ENCODE measurements at regions of chr12 and their contacts with region 1.

Region 1: GRCh38 chr12:130818635-130819576 is 20.1 kb downstream of the STX2 start:
- DNase-seq: peak; percentile 80
- ATAC-seq: peak; percentile 93
- H3K4me3 Mint-ChIP-seq: peak overlapping the region; percentile 91
- H3K27ac Mint-ChIP-seq: peak overlapping the region; percentile 37
- H3K4me1 Mint-ChIP-seq: peaks cover 14% of the 10 kb centered on the region
- H3K27me3 Mint-ChIP-seq: no peaks in the 10 kb centered on the region
- CTCF ChIP-seq: peak; percentile 91

Region 2: DNA sequence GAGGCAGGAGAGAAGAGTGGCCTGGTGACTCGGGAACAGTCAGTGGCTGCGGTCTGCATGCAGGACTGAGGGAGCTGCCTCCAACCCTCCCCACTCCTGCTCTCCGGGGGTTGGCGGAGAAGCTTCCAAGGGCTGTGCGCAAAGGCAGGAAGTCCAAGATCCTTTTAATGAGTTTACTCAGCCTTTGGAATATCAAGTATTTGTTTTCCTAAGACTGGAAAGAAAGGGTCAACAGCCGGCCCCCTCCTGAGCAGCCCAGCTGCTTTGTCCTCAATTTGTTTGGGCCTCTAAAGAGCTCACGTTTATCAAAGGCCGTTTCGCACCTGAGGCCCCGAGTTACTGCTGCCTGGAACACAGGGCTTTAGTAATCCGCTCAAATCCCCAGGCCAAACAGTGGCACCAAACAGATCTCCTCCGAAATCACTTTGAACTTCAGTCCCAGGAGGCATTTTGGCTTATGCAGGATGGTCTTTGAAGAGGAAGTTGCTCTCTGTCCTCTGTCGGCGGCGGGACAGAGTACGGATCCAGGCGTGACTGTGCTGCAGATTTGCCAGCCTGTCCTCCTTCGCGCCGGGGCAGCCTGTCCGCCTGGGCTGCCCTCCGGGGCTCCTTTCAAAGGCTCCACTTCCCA is 773.8 kb before region 1 on chr12:
- CTCF ChIA-PET with region 1: interaction called, 4 read pairs
- POLR2A ChIA-PET with region 1: no interaction called
- intact Hi-C with region 1: loop called (anchors 5 kb)
- DNase-seq: no peak
- ATAC-seq: no peak
- H3K4me3 Mint-ChIP-seq: no peak overlapping the region
- H3K27ac Mint-ChIP-seq: no peak overlapping the region
- H3K4me1 Mint-ChIP-seq: no peaks in the 10 kb centered on the region
- H3K27me3 Mint-ChIP-seq: peaks cover 30% of the 10 kb centered on the region
- CTCF ChIP-seq: no peak

Region 3: DNA sequence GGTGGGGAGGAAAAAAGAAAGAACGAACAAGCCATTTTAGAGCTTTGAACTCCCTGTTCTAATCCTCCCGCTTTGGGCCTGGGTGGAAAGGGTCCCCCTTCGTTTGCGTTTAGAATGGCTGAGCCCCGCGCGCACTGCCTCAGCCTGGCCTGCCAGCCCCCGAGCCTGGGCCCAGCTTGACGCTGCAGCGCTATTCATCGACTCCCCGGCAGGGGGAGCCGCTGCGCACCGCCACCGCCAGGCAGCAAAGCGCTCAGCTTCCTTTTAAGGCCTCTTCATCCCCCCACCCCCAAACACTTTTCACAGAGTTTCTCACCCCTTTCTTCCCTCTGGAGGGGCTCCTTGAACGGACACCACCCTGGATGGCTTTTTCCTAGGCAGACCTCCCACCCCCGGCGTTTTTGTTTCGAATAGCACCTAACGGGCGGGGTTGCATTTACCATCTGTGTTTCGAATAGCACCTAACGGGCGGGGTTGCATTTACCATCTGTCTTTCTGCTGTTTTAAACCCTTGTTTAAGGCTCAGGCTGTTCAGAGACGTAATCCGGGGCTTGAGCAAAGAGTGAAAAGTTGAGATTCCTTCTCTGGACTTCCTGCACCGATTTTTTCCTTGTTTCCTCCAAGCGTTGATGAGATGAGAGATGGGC is 537.6 kb before region 1 on chr12:
- CTCF ChIA-PET with region 1: no interaction called
- POLR2A ChIA-PET with region 1: no interaction called
- intact Hi-C with region 1: loop called (anchors 5 kb)
- DNase-seq: peak; percentile 27
- ATAC-seq: no peak
- H3K4me3 Mint-ChIP-seq: no peak overlapping the region
- H3K27ac Mint-ChIP-seq: no peak overlapping the region
- H3K4me1 Mint-ChIP-seq: no peaks in the 10 kb centered on the region
- H3K27me3 Mint-ChIP-seq: no peaks in the 10 kb centered on the region
- CTCF ChIP-seq: no peak

Region 4: DNA sequence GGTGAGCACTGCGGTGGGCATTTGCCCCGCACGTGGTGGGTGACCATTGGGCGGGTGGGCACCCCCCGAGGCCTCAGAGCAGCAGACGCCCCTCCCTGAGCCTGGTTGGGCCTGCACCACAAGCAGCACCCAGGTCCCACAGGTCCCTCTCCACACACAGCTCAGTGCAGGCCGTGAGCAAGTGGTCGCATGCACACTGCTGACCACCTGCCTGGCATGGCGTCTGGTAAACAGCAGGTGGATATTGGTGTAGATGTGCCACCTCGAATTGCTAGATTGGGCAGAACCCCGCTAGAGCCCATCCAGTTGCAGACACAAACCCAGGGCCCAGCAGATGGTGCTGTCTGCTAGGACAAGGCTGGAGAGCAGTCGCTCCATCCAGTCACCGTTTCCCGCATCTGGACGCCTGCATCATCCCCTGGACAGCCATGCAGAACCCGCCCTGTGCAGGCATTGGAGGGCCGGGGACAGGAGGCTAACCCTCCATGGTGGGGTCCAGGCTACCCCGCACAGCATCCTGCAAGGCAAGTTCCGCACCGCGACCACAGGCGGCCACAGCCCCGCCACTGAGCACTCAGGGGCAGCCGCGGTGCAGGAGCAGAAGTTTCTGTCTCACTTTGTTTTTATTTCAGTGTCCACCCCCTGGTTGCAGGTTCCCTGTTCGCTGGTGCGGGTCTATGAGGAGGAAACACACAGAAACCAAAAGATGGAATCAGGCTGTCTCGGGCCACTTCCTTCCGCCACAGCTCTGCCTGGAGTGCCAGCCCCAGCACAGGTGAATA is 57.2 kb before region 1 on chr12:
- CTCF ChIA-PET with region 1: no interaction called
- POLR2A ChIA-PET with region 1: no interaction called
- intact Hi-C with region 1: loop called (anchors 1 kb)
- DNase-seq: no peak
- ATAC-seq: peak; percentile 34
- H3K4me3 Mint-ChIP-seq: peak overlapping the region; percentile 9
- H3K27ac Mint-ChIP-seq: no peak overlapping the region
- H3K4me1 Mint-ChIP-seq: peaks cover 10% of the 10 kb centered on the region
- H3K27me3 Mint-ChIP-seq: peaks cover 7% of the 10 kb centered on the region
- CTCF ChIP-seq: no peak

Region 5: DNA sequence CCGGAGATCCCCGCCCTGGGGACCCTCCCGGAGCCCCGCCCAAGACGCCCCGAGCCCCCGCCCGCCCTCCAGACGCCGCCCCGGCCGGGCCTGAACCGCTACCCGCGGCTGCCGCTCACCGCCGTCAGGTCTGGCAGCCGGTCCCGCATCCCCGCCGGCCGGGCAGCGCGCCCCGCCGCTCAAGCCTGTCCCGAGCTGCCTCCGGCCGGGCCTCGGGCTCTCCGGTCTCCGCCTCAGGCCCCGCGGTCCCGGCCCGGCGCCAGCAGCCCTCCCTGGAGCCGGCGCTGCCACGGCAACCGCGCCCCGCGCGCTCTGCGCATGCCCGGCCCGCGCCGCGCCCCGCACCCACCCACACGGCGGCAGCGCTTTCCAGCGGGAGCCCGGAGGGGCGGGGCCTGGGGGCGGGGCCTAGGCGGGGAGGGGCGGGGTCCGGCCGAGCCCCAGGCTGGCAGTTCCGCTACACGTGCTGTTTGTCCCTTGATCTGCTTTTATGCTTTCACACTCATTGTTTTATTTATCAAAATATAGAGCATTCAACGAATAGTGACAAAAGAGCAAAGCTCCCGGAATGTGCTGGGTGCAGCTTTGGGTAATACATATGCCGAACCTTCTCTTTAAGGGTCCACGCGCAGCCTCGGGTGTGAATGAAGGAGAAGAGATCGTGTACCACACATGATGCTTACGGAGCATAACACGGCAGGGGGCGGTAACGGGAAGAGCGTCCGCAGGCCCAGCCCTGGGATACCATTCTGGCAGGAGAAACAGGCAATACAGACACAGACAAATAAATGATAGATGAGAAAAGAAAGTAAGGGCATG is 20.3 kb after region 1 on chr12 and contains the start of gene STX2:
- CTCF ChIA-PET with region 1: interaction called, 4 read pairs
- POLR2A ChIA-PET with region 1: no interaction called
- intact Hi-C with region 1: loop called (anchors 1 kb)
- DNase-seq: peak; percentile 96
- ATAC-seq: peak; percentile 94
- H3K4me3 Mint-ChIP-seq: peak within 1 kb of the TSS; percentile 83
- H3K27ac Mint-ChIP-seq: peak within 1 kb of the TSS; percentile 61
- H3K4me1 Mint-ChIP-seq: peaks cover 18% of the 10 kb centered on the region
- H3K27me3 Mint-ChIP-seq: no peaks in the 10 kb centered on the region
- CTCF ChIP-seq: no peak
- total RNA-seq, gene STX2: 11.0 and 11.4 TPM in 2 replicates

Region 6: GRCh38 chr12:130871286-130872178 is 52.6 kb after region 1 on chr12 and contains the start of gene RAN:
- CTCF ChIA-PET with region 1: interaction called, 4 read pairs
- POLR2A ChIA-PET with region 1: interaction called, 7 read pairs
- intact Hi-C with region 1: loop called (anchors 1 kb)
- DNase-seq: peak; percentile 89
- ATAC-seq: peak; percentile 79
- H3K4me3 Mint-ChIP-seq: peak within 1 kb of the TSS; percentile 92
- H3K27ac Mint-ChIP-seq: peak within 1 kb of the TSS; percentile 93
- H3K4me1 Mint-ChIP-seq: peaks cover 42% of the 10 kb centered on the region
- H3K27me3 Mint-ChIP-seq: no peaks in the 10 kb centered on the region
- CTCF ChIP-seq: no peak
- total RNA-seq, gene RAN: 748 and 757 TPM in 2 replicates

Region 7: GRCh38 chr12:131132118-131132892 is 313.4 kb after region 1 on chr12:
- CTCF ChIA-PET with region 1: no interaction called
- POLR2A ChIA-PET with region 1: no interaction called
- intact Hi-C with region 1: loop called (anchors 2 kb)
- DNase-seq: peak; percentile 72
- ATAC-seq: peak; percentile 77
- H3K4me3 Mint-ChIP-seq: no peak overlapping the region
- H3K27ac Mint-ChIP-seq: no peak overlapping the region
- H3K4me1 Mint-ChIP-seq: no peaks in the 10 kb centered on the region
- H3K27me3 Mint-ChIP-seq: peaks cover 2% of the 10 kb centered on the region
- CTCF ChIP-seq: no peak

Region 8: GRCh38 chr12:131415781-131416180 is 596.9 kb after region 1 on chr12:
- CTCF ChIA-PET with region 1: no interaction called
- POLR2A ChIA-PET with region 1: no interaction called
- intact Hi-C with region 1: no loop called
- DNase-seq: no peak
- ATAC-seq: no peak
- H3K4me3 Mint-ChIP-seq: no peak overlapping the region
- H3K27ac Mint-ChIP-seq: no peak overlapping the region
- H3K4me1 Mint-ChIP-seq: no peaks in the 10 kb centered on the region
- H3K27me3 Mint-ChIP-seq: peaks cover 6% of the 10 kb centered on the region
- CTCF ChIP-seq: no peak

Measured in activated B cell treated with CpG ODN at 0.5 μM for 24 hours (primary cell).